GM13977 (cell line): ENCODE measurements at regions of chr16 and their contacts with region 1.

Region 1: DNA sequence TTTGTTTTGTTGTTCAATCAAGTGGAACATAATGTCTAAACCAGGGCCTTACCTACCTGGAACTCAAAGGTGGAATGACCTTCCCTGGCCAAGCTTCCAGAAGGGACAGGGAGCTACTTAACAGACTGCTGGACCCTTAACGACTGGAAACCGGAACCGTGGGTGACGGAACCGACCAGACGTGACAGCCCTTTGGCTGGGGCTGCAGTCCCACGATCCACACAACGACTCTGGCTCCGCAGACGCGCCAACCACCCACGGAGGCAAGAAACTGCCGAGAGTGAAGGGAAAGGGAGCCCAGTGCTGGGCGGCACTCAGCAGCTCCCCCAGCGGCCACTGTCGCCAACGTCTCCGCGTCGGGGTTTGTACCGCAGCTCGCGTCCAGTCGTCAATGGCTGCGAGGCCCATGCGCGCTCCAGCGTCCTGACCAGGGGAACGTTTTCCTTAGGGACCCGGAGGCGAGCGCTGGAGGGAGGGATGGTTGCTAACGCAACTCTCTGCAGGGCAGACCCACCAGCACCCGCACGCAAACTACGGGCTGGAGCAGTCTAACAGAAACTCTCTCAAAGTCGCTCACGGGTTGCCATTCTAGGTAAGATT is 5.5 kb upstream of the KIF22 start:
- DNase-seq: peak; percentile 70
- CTCF ChIP-seq: peak; percentile 89

Region 2: DNA sequence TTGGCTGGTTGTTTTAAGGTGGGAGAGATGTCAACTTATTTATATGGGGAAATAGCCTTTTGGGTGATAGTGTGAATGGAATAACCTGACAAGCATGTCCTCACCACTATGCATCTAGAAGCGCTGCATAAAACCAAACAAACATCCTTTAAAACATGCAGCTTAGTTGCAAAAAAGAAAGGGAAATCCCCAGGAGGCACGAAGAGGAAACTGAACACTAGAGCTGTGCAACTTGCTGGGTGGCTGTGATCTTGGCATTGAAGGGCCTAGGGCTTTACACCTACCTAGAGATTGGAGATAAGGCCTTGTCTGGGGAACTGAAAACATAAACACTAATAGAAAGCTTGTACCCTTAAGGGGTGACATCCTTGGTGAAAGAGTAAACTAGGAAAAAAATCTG is 46.5 kb before region 1 on chr16:
- in situ Hi-C with region 1: loop called (anchors 10 kb)
- DNase-seq: peak; percentile 69
- CTCF ChIP-seq: no peak

Region 3: GRCh38 chr16:29995911-29996772 is 211.1 kb after region 1 on chr16 and contains the start of gene INO80E:
- in situ Hi-C with region 1: no loop called
- DNase-seq: peak; percentile 100
- CTCF ChIP-seq: no peak